CD4-positive, alpha-beta T cell (primary cell): ENCODE measurements at regions of chr5 and their contacts with region 1.

Region 1: DNA sequence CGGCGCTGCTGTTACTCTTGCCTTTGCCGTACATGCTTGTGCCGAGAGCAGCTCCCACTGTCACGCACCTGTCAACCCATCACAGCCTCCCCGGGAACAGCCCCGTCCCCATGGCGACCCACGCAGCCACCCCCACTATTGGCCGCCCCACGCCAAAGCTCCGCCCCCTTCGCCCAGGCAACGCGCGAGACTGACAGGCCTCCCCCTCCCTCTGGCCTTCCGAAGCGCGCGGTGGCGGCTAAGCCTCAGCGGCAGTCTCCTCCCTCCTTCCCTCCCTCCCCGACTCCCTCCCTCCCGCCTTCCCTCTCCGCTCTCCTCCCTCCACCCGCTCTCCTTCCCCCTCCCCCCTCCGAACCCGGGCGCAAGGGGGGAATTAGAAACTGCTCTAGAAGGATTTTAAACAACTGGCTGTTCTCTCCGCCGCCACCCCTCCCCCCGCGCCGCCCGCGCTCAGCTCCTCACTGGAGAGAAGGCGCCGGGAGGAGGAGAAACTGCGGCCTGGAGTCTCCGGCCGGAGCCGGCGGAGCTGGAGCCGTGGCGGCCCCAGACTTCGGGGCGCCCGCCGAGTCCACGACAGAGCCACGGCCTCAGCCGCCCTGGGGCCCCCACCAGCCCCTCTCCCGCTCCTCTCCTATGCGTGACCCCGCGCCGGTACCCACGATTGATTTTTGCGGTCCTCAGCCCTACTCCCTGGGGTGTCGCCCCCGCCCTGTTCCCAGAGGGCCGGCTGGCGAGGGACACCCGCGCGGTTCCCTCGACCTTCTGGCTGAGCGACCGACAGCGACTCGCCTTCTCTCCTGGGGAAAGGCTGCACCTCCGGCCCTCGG is at the start of gene SSBP2:
- DNase-seq: peak; percentile 99 to 100 (median 100)
- ATAC-seq: peak; percentile 87
- H3K4me3 ChIP-seq: peak within 1 kb of the TSS; percentile 68
- H3K4me3 Mint-ChIP-seq: peak within 1 kb of the TSS; percentile 99
- H3K27ac ChIP-seq: peak within 1 kb of the TSS; percentile 66 to 79
- H3K27ac Mint-ChIP-seq: peak within 1 kb of the TSS; percentile 96
- H3K4me1 ChIP-seq: peaks cover 13% of the 10 kb centered on the region
- H3K4me1 Mint-ChIP-seq: peaks cover 44% of the 10 kb centered on the region
- H3K27me3 ChIP-seq: no peaks in the 10 kb centered on the region
- H3K27me3 Mint-ChIP-seq: no peaks in the 10 kb centered on the region
- CTCF ChIP-seq: no peak
- total RNA-seq, gene SSBP2: 33.5 to 36.3 TPM

Region 2: DNA sequence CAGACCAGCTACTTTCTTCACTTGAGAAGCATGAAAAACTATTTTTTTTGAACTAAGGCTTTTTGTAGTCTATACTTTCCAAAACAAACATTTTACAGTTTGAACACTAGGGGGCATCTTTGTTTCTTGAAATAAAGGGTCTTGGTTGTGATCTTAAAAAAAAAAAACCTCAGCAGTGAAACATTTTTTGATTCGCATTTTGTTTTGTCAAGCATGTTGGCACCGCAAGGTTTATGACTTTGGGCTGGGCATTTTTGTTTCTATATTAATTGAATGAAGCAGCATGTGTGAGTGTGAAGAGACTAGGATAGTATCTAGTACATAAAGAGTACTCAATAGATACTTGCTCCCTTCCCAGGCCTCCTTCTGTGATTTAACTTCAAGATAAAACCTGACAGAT is 325.7 kb before region 1 on chr5:
- CTCF ChIA-PET with region 1: no interaction called
- POLR2A ChIA-PET with region 1: interaction called, 3 read pairs
- intact Hi-C with region 1: loop called in 1 of 2 experiments (anchors 5 kb)
- DNase-seq: peak in 3 of 14 experiments; percentile 55 to 61 (median 57)
- ATAC-seq: peak; percentile 71
- H3K4me3 ChIP-seq: no peak overlapping the region
- H3K4me3 Mint-ChIP-seq: no peak overlapping the region
- H3K27ac ChIP-seq: peak overlapping the region in 1 of 2 donors; percentile 3
- H3K27ac Mint-ChIP-seq: peak overlapping the region; percentile 3
- H3K4me1 ChIP-seq: no peaks in the 10 kb centered on the region
- H3K4me1 Mint-ChIP-seq: peaks cover 11% of the 10 kb centered on the region
- H3K27me3 ChIP-seq: no peaks in the 10 kb centered on the region
- H3K27me3 Mint-ChIP-seq: no peaks in the 10 kb centered on the region
- CTCF ChIP-seq: peak; percentile 89

Region 3: GRCh38 chr5:81533629-81534405 is 217.4 kb before region 1 on chr5:
- CTCF ChIA-PET with region 1: no interaction called
- POLR2A ChIA-PET with region 1: interaction called, 22 read pairs
- intact Hi-C with region 1: no loop called
- DNase-seq: no peak
- ATAC-seq: no peak
- H3K4me3 ChIP-seq: no peak overlapping the region
- H3K4me3 Mint-ChIP-seq: peak overlapping the region; percentile 18
- H3K27ac ChIP-seq: no peak overlapping the region
- H3K27ac Mint-ChIP-seq: peak overlapping the region; percentile 53
- H3K4me1 ChIP-seq: peaks cover 18% of the 10 kb centered on the region
- H3K4me1 Mint-ChIP-seq: peaks cover 78% of the 10 kb centered on the region
- H3K27me3 ChIP-seq: no peaks in the 10 kb centered on the region
- H3K27me3 Mint-ChIP-seq: no peaks in the 10 kb centered on the region
- CTCF ChIP-seq: no peak

Region 4: DNA sequence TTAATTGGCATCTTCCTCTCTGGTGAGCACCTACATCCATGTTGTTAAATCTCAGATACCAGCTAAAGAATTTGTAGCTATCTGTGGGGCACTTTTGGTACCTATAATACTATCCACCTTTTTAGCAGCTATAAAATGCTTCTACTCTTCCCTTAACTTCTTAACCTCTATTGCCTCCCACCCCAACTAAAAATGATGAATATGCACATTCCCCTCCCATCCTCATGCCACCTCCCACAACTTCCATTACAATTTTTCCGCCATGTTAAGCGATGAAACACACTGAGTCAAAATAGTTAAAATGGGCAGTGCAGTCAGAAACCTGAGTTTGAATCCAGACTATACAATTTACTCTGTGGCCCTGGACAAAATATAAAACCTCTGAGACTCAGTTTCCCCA is 10.5 kb before region 1 on chr5:
- CTCF ChIA-PET with region 1: interaction called, 5 read pairs
- POLR2A ChIA-PET with region 1: interaction called, 17 read pairs
- intact Hi-C with region 1: no loop called
- DNase-seq: no peak
- ATAC-seq: no peak
- H3K4me3 ChIP-seq: no peak overlapping the region
- H3K4me3 Mint-ChIP-seq: no peak overlapping the region
- H3K27ac ChIP-seq: no peak overlapping the region
- H3K27ac Mint-ChIP-seq: no peak overlapping the region
- H3K4me1 ChIP-seq: peaks cover 3% of the 10 kb centered on the region
- H3K4me1 Mint-ChIP-seq: peaks cover 58% of the 10 kb centered on the region
- H3K27me3 ChIP-seq: no peaks in the 10 kb centered on the region
- H3K27me3 Mint-ChIP-seq: no peaks in the 10 kb centered on the region
- CTCF ChIP-seq: no peak

Region 5: DNA sequence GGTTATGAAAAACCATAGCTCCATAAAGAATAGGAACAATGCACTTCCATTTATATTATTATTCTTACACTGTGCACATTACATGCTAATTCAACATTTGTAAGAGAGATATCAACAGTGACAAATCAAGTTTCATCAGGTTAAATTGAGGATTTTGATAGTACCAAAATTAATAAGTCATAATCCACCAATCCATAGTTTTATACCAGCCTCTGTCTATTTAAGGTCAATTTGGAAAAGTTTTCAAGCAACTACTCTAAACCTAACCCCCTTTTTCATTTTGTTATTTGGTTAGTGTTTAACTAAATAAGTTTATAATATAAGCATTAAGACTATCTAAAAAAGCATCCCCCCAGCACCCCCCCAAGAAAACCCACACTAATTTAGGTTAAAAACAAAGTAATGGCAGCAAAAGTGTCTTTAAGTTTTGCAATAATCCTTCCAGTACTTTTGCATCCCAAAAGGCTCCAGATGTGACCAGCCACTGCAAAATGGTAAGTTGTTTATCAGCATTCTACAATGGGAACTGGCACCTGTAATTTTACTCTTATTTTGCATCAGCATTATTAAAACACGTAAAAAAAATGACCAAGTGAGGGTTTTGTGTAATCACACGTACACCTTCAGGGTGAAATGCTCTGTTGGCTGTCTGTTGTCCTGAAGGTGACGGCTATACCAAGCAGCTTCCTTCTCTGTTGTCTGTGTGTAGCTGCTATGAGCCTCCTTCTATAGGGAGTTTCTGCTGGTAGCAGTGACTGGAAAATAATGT is 36.4 kb after region 1 on chr5:
- CTCF ChIA-PET with region 1: no interaction called
- POLR2A ChIA-PET with region 1: interaction called, 6 read pairs
- intact Hi-C with region 1: loop called in 1 of 2 experiments (anchors 5 kb)
- DNase-seq: peak in 1 of 14 experiments; percentile 34
- ATAC-seq: no peak
- H3K4me3 ChIP-seq: no peak overlapping the region
- H3K4me3 Mint-ChIP-seq: no peak overlapping the region
- H3K27ac ChIP-seq: no peak overlapping the region
- H3K27ac Mint-ChIP-seq: no peak overlapping the region
- H3K4me1 ChIP-seq: no peaks in the 10 kb centered on the region
- H3K4me1 Mint-ChIP-seq: peaks cover 13% of the 10 kb centered on the region
- H3K27me3 ChIP-seq: no peaks in the 10 kb centered on the region
- H3K27me3 Mint-ChIP-seq: no peaks in the 10 kb centered on the region
- CTCF ChIP-seq: no peak

Region 6: DNA sequence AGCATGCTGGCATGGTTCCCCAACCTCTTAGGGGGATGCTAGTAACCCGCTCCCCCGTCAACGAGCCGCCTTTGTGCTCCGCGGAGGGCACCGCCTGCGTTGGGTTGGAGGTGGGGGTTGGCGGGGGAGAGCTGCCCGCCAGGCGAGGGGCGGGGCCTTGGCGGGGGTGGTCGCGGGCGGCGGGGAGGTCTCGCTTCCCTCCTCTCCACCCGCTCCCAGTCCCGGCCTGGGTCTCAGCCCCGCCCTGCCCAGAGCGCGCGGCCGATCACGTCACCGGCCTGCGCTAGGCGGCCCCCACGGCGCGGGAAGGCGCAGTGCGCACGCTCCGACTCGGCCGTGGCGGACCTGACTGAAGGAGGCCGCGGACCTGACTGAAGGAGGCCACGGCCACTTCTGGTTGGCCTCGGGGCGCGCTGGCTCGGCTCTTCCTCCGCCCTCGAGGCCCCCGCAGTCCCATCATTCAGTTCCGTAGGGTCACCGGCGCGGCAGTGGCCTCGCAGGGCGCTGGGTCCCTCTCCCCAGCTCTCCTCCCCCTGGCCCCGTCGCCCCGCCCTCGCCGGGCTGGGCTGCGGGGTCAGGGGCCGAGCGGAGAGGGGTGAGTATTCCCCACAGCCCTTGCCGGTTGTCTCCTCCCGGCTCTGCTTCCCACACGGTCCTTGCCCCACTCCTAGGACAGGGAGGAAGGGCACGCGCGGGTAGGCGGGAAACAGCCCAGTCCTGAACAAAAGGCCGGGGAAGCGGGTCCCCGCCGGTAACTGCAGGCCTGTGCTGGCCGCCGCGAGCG is 220.7 kb after region 1 on chr5 and contains the start of gene ATG10:
- CTCF ChIA-PET with region 1: no interaction called
- POLR2A ChIA-PET with region 1: interaction called, 37 read pairs
- intact Hi-C with region 1: loop called (anchors 2 kb)
- DNase-seq: peak; percentile 60 to 94 (median 82)
- ATAC-seq: peak; percentile 82
- H3K4me3 ChIP-seq: peak within 1 kb of the TSS; percentile 90
- H3K4me3 Mint-ChIP-seq: peak within 1 kb of the TSS; percentile 98
- H3K27ac ChIP-seq: peak within 1 kb of the TSS; percentile 87 to 98
- H3K27ac Mint-ChIP-seq: peak within 1 kb of the TSS; percentile 96
- H3K4me1 ChIP-seq: peaks cover 5% of the 10 kb centered on the region
- H3K4me1 Mint-ChIP-seq: peaks cover 31% of the 10 kb centered on the region
- H3K27me3 ChIP-seq: no peaks in the 10 kb centered on the region
- H3K27me3 Mint-ChIP-seq: no peaks in the 10 kb centered on the region
- CTCF ChIP-seq: no peak
- total RNA-seq, gene ATG10: 4.7 to 5.3 TPM

Region 7: GRCh38 chr5:82115858-82116257 is 364.6 kb after region 1 on chr5:
- CTCF ChIA-PET with region 1: no interaction called
- POLR2A ChIA-PET with region 1: no interaction called
- intact Hi-C with region 1: no loop called
- DNase-seq: no peak
- ATAC-seq: no peak
- H3K4me3 ChIP-seq: no peak overlapping the region
- H3K4me3 Mint-ChIP-seq: no peak overlapping the region
- H3K27ac ChIP-seq: no peak overlapping the region
- H3K27ac Mint-ChIP-seq: no peak overlapping the region
- H3K4me1 ChIP-seq: no peaks in the 10 kb centered on the region
- H3K4me1 Mint-ChIP-seq: no peaks in the 10 kb centered on the region
- H3K27me3 ChIP-seq: no peaks in the 10 kb centered on the region
- H3K27me3 Mint-ChIP-seq: no peaks in the 10 kb centered on the region
- CTCF ChIP-seq: no peak

Region 8: GRCh38 chr5:82664732-82665131 is 913.5 kb after region 1 on chr5:
- CTCF ChIA-PET with region 1: no interaction called
- POLR2A ChIA-PET with region 1: no interaction called
- intact Hi-C with region 1: no loop called
- DNase-seq: no peak
- ATAC-seq: no peak
- H3K4me3 ChIP-seq: no peak overlapping the region
- H3K4me3 Mint-ChIP-seq: no peak overlapping the region
- H3K27ac ChIP-seq: no peak overlapping the region
- H3K27ac Mint-ChIP-seq: no peak overlapping the region
- H3K4me1 ChIP-seq: no peaks in the 10 kb centered on the region
- H3K4me1 Mint-ChIP-seq: no peaks in the 10 kb centered on the region
- H3K27me3 ChIP-seq: no peaks in the 10 kb centered on the region
- H3K27me3 Mint-ChIP-seq: no peaks in the 10 kb centered on the region
- CTCF ChIP-seq: no peak